HepG2 (cell line): ENCODE measurements at regions of chr19 and their contacts with region 1.

Region 1: GRCh38 chr19:42465827-42466280 is 23.1 kb upstream of the CXCL17 start:
- DNase-seq: no peak
- ATAC-seq: no peak
- H3K4me3 ChIP-seq: no peak overlapping the region
- H3K27ac ChIP-seq: no peak overlapping the region
- H3K4me1 ChIP-seq: peaks cover 73% of the 10 kb centered on the region
- H3K27me3 ChIP-seq: no peaks in the 10 kb centered on the region
- CTCF ChIP-seq: no peak
- EP300 ChIP-seq: no peak
- POLR2A ChIP-seq: no peak
- RAD21 ChIP-seq: no peak

Region 2: DNA sequence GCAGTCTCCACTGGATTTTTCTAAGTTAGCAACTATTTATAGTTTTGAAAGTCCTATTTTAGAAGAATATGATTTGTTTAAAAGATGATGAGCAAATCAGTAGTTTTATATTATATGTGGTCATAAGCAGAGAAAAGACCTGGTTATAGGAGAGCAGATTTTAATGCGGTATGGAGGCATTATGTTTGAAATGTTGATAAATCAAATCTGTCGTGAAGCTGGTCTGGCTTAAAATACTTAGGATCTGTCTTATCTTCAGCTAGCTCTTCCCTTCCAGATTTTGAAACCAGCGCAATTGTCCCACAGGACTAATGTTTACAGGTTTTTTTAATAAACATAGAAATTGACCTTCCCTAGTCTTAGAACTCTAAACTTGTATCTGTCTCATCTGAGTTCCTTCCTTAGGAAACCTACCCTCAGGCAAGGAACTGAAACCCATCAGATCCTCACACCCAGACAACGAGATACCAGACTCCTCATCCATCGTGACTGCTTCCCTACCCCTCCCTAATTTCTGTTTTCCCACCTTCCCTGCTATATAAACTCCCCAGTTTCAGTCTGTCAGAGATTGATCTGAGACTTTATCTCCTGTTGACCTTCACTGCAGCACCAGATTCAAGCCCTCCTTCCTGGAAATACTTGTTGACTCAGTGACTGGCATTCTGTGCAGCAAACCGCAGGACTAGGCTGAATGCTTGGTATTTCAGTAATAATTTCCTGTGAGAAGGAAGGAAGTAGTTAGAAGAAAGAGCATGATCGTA is 14.7 kb after region 1 on chr19:
- CTCF ChIA-PET with region 1: no interaction called
- POLR2A ChIA-PET with region 1: no interaction called
- in situ Hi-C with region 1: no loop called
- intact Hi-C with region 1: loop called (anchors 2 kb)
- DNase-seq: peak; percentile 93
- ATAC-seq: peak; percentile 82
- H3K4me3 ChIP-seq: no peak overlapping the region; a peak in 1 of 6 replicates
- H3K27ac ChIP-seq: peak overlapping the region; percentile 70
- H3K4me1 ChIP-seq: peaks cover 66% of the 10 kb centered on the region
- H3K27me3 ChIP-seq: no peaks in the 10 kb centered on the region
- CTCF ChIP-seq: no peak
- EP300 ChIP-seq: peak in 1 of 2 experiments; percentile 94; a peak in 2 of 4 replicates
- POLR2A ChIP-seq: no peak
- RAD21 ChIP-seq: no peak